Psoas muscle (tissue), 8 donors: ENCODE measurements at regions of chr15 and their contacts with region 1.

Region 1: DNA sequence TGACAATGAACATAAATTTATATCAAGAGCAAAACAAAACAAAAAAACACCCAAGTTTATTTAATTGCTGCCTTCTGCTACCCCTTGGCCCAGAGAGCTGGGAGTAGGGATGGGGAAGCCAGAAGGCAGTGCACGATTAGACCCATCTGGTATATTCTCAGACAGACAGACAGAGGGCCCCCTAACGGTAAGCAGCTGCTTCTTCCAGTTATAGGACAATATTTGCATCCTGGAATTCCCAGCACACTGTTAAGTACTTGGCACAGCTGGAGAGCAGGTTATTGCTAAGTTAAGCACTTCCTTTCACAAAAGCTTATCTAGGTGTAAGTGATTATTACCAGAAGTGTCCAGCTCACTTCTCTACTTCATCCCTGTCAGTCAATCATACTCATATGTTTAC is 39.3 kb downstream of the C2CD4B start:
- DNase-seq: no peak
- ATAC-seq: peak; percentile 27 to 74 (median 70)
- H3K4me3 ChIP-seq: no peak overlapping the region
- H3K27ac ChIP-seq: no peak overlapping the region
- H3K4me1 ChIP-seq: no peaks in the 10 kb centered on the region
- H3K27me3 ChIP-seq: no peaks in the 10 kb centered on the region
- CTCF ChIP-seq: peak; percentile 31

Region 2: DNA sequence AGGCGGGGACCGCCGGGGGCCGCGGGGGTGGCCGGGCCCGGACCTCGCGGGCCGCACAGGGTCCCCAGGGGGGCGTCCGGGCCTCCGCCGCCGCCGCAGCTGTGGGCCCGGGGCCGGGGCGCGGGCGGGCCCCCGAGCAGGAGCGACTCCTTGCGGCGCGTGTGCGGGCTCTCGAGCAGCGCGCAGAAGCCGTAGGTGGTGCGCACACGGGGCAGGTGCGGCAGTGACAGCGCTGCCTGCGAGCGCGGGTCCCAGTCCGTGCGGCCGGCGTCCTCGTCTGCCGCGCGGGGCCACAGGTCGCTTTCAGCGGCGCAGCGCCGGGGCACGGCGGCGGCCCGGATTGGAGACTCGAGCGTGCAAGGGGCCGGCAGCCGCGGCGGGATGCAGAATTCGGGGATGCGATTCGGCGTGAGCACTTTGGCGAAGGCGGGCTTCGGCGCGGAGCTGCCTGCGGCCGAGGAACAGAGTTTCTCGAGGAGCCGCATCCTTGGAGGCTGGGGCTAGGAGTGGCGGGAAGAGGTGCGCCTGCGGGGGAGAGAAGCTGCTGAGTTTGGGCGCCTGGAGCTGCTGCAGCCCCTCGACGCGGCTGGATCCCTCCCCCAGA is 38.8 kb after region 1 on chr15:
- intact Hi-C with region 1: loop called in 1 of 2 experiments (anchors 5 kb)
- DNase-seq: peak; percentile 15 to 54
- ATAC-seq: peak; percentile 37 to 60 (median 48)
- H3K4me3 ChIP-seq: peak overlapping the region; percentile 66
- H3K27ac ChIP-seq: peak overlapping the region; percentile 34
- H3K4me1 ChIP-seq: no peaks in the 10 kb centered on the region
- H3K27me3 ChIP-seq: peaks cover 0 to 48% (median 9%) of the 10 kb centered on the region in 3 donors
- CTCF ChIP-seq: no peak

Region 3: DNA sequence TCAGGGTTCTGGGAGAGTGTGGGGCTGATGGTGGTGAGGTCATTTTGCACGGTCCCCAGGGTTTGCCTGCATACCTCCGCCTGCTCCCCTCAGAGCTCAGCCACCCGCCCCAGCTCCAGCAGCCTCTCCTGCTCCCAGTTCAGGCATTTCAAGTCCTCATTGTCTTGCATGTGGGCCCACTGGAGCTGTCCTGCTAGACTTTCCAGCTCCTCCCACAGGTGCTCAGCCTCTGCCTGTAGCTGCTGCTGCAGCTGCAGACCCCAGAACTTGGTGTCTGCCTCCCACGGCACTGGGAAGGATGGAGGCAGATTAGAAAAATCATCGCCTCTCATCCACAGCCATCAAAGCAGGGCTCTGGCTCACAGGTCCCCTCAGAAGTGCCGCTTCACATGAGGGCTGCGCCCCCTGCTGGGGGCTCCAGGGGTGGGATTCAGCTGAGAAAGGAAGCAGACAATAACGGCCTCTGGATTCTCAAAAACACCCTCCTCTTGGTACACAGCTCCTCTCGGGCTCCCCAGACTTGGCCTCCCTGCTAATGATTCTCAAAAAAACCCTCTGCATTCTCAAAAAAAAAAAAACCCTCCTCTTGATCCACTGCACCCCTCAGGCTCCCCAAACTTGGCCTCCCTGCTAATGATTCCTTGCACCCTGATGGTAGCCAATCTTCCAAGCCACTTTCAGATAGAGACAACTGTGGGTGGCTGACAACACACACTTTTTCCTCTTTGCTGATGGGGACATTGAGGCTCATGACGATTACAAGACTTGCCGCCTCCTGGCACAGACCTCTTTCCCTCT is 128.6 kb after region 1 on chr15:
- intact Hi-C with region 1: loop called in 1 of 2 experiments (anchors 10 kb)
- DNase-seq: peak; percentile 69 to 77
- ATAC-seq: peak; percentile 57 to 79 (median 72)
- H3K4me3 ChIP-seq: no peak overlapping the region
- H3K27ac ChIP-seq: no peak overlapping the region
- H3K4me1 ChIP-seq: no peaks in the 10 kb centered on the region
- H3K27me3 ChIP-seq: no peaks in the 10 kb centered on the region
- CTCF ChIP-seq: peak; percentile 65

Region 4: GRCh38 chr15:62306851-62307504 is 181.2 kb after region 1 on chr15:
- intact Hi-C with region 1: loop called in 1 of 2 experiments (anchors 10 kb)
- DNase-seq: peak in 1 of 2 donors; percentile 35
- ATAC-seq: peak; percentile 76 to 90 (median 87)
- H3K4me3 ChIP-seq: no peak overlapping the region
- H3K27ac ChIP-seq: no peak overlapping the region
- H3K4me1 ChIP-seq: peaks cover 3% of the 10 kb centered on the region
- H3K27me3 ChIP-seq: peaks cover 0 to 9% (median 0%) of the 10 kb centered on the region in 3 donors
- CTCF ChIP-seq: peak; percentile 69